Thyroid gland (tissue), 4 donors: ENCODE measurements at regions of chr1 and their contacts with region 1.

Region 1: DNA sequence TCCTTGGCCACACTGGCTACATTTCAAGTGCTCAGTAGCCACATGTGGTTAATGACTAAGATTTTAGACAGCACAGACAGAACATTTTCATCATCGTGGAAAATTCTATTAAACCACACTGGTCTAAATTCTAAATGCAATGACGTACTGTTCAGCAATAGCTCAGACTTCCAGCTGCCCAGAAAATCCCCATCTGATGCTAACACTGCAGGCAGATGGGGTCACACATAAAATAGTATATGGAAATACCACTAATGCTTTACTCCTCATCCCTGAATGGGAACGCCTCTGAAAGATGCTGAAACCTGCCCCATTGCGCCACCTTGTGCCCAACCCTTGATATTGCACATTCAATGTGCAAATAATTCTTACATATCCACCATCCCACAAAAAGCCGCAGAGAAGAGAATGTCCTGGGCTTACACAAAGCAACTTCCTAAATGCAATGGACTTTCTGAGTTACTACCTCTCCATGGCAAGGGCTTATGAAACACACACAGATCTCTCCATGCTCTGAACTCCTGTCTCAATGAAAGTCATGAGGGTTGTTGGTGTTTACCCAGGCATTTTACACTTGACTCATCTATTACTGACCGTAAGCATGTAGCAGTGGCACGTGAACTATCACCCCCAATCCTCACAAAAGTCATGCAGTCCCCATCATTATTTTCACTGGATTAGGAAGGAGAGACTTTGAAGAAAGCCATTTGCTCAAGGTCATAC is 20.3 kb upstream of the SLC5A9 start:
- DNase-seq: peak; percentile 54 to 73
- H3K4me3 ChIP-seq: no peak overlapping the region
- H3K27ac ChIP-seq: no peak overlapping the region
- H3K4me1 ChIP-seq: no peaks in the 10 kb centered on the region
- H3K27me3 ChIP-seq: no peaks in the 10 kb centered on the region
- CTCF ChIP-seq: peak; percentile 68 to 83 (median 78)
- POLR2A ChIP-seq: no peak

Region 2: GRCh38 chr1:48109390-48110013 is 92.7 kb before region 1 on chr1:
- intact Hi-C with region 1: loop called (anchors 2 kb)
- DNase-seq: peak in 1 of 2 donors; percentile 11
- H3K4me3 ChIP-seq: no peak overlapping the region
- H3K27ac ChIP-seq: no peak overlapping the region
- H3K4me1 ChIP-seq: no peaks in the 10 kb centered on the region
- H3K27me3 ChIP-seq: no peaks in the 10 kb centered on the region
- CTCF ChIP-seq: peak; percentile 68 to 93 (median 85)
- POLR2A ChIP-seq: no peak